GM12878 (cell line): ENCODE measurements at regions of chr4 and their contacts with region 1.

Region 1: DNA sequence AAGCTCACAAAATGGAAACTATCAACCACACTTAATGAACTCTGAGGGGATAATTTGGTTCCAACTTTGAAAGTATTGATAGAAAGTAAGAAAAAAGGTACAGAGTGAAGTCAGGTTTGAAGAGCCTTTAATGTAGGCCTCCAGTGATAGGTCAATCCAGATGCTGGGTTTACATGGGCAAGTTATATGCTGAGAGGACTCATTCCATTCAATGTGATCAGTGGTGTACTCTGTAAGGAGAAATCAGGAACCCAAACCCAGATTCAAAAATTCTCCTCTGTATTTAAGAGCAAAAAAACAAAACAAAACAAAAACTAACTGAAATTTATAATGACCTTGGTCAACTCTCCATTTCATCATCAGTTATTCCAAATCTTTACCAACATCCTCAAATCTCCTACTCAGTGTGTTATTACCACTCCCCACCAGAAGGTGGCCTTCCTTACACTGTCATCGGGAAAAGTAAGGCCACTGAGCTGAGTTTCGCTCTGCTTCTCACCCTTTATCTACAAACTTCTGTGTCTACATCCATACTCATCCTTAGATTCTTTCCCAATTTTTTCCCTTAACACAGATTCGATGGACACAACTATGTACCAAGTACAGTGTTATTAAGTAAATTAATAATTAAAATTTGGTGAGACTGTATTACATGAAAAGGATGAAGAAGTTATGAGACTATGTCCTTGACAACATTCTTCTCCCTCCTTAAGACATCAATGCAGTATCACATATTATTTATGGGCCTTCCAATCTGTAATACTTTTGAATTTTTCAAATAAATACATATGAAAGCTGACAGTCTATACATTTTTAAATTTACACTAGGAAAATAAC is 88.3 kb downstream of the ZAR1 start:
- DNase-seq: peak; percentile 12
- ATAC-seq: peak; percentile 90
- H3K4me3 ChIP-seq: no peak overlapping the region
- H3K27ac ChIP-seq: no peak overlapping the region
- H3K4me1 ChIP-seq: no peaks in the 10 kb centered on the region
- H3K27me3 ChIP-seq: no peaks in the 10 kb centered on the region
- CTCF ChIP-seq: peak; percentile 82 to 86 (median 85)
- EP300 ChIP-seq: no peak
- POLR2A ChIP-seq: no peak
- RAD21 ChIP-seq: peak; percentile 93

Region 2: DNA sequence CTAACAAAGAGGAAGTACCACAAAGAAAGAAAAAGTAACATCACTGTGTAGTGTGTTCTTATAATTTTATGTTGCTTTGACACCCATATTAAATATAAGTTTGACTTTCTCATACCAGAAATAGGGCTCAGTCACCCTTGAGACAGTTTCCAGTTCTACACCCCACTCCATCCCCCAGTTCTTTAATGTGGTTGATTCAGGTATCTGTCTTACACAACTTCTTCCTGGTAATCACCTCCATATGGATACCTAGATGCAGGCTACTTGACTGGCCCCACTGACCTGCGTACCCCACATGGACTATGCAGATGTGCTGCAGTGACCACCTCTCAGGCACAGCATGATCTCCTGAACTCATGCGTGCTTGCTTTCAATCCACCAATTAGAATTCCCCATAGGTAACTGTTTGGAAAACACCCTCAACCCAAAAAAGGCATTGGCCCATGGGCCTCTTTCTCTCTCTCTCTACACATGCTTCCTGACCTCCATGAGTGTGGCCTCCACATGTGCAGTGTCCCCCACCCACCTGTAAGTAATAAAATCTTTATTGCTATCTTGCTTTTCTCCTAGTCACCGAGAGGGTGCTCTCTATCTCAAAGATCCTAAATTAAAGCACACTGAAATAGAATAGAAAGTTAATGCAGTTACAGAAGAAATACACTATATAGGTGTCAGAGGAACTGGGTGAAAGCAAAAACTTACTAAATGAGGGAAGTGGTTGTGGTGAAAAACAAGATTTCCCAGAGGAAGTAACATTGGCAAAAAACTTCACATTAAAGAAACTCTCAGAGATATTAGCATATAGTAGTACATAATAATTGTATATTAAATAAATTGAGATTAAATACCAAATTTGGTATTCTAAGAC is 10.1 kb after region 1 on chr4:
- CTCF ChIA-PET with region 1: interaction called, 10 read pairs
- POLR2A ChIA-PET with region 1: no interaction called
- RAD21 ChIA-PET with region 1: interaction called, 4 read pairs
- SMC1A ChIA-PET with region 1: interaction called, 5 read pairs
- in situ Hi-C with region 1: no loop called
- intact Hi-C with region 1: no loop called
- DNase-seq: no peak
- ATAC-seq: peak; percentile 35
- H3K4me3 ChIP-seq: no peak overlapping the region
- H3K27ac ChIP-seq: no peak overlapping the region
- H3K4me1 ChIP-seq: peaks cover 7% of the 10 kb centered on the region
- H3K27me3 ChIP-seq: no peaks in the 10 kb centered on the region
- CTCF ChIP-seq: no peak
- EP300 ChIP-seq: no peak
- POLR2A ChIP-seq: no peak
- RAD21 ChIP-seq: no peak

Region 3: GRCh38 chr4:48668254-48669017 is 90.1 kb after region 1 on chr4:
- CTCF ChIA-PET with region 1: interaction called, 11 read pairs
- POLR2A ChIA-PET with region 1: no interaction called
- RAD21 ChIA-PET with region 1: no interaction called
- SMC1A ChIA-PET with region 1: no interaction called
- in situ Hi-C with region 1: no loop called
- intact Hi-C with region 1: no loop called
- DNase-seq: no peak
- ATAC-seq: peak; percentile 59
- H3K4me3 ChIP-seq: no peak overlapping the region
- H3K27ac ChIP-seq: 0 out of 2 replicates have a peak overlapping the region, but pooled peaks have one; percentile 11
- H3K4me1 ChIP-seq: no peaks in the 10 kb centered on the region
- H3K27me3 ChIP-seq: no peaks in the 10 kb centered on the region
- CTCF ChIP-seq: no peak
- EP300 ChIP-seq: no peak
- POLR2A ChIP-seq: no peak
- RAD21 ChIP-seq: no peak

Region 4: GRCh38 chr4:48698029-48698971 is 120.0 kb after region 1 on chr4:
- CTCF ChIA-PET with region 1: interaction called, 17 read pairs
- POLR2A ChIA-PET with region 1: no interaction called
- RAD21 ChIA-PET with region 1: no interaction called
- SMC1A ChIA-PET with region 1: interaction called, 6 read pairs
- in situ Hi-C with region 1: no loop called
- intact Hi-C with region 1: no loop called
- DNase-seq: no peak
- ATAC-seq: no peak
- H3K4me3 ChIP-seq: no peak overlapping the region
- H3K27ac ChIP-seq: no peak overlapping the region
- H3K4me1 ChIP-seq: peaks cover 6% of the 10 kb centered on the region
- H3K27me3 ChIP-seq: no peaks in the 10 kb centered on the region
- CTCF ChIP-seq: no peak
- EP300 ChIP-seq: no peak
- POLR2A ChIP-seq: no peak
- RAD21 ChIP-seq: no peak

Region 5: DNA sequence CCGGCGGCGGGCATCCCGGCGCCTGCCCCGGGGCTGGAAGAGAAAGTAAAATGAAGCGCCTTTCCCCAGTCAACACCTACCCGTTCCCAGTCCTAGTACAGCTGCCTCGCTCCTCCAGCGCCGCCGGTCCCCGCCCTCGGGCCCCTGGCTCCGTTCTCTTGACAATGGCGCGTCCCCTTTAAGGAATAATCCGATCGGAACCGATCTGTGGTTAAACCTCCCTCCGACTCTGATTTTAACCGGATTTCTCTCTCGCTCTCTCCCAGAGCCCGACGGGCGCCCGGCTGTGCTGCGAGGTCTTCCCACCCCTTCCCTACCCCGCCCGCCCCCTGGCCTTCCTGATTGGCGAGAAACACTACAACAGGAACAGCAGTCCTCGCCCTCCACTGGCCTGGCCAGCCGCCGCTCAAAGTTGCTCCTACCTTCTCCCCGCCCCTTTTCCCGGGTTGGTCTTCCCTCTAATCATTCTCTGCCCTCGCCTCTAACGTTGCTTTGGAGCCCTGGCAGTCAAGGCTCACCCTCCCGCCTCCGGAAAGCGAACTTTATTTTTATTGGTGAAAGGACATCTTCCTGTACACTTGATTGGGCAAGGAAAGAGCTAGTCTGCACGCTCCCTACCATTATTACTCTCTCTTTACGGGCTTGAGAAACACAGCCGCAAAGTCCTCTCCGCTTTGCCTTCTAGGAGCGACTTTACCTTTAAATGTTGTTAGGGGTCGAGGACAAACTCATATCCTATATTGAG is 201.8 kb after region 1 on chr4 and contains the start of gene FRYL:
- CTCF ChIA-PET with region 1: interaction called, 38 read pairs
- POLR2A ChIA-PET with region 1: interaction called, 3 read pairs
- RAD21 ChIA-PET with region 1: interaction called, 4 read pairs
- SMC1A ChIA-PET with region 1: interaction called, 4 read pairs
- in situ Hi-C with region 1: no loop called
- intact Hi-C with region 1: loop called (anchors 5 kb)
- DNase-seq: peak; percentile 99
- ATAC-seq: peak; percentile 88
- H3K4me3 ChIP-seq: peak within 1 kb of the TSS; percentile 97
- H3K27ac ChIP-seq: peak within 1 kb of the TSS; percentile 97
- H3K4me1 ChIP-seq: 0 out of 2 replicates have a peak, but pooled peaks cover 2% of the 10 kb centered on the region
- H3K27me3 ChIP-seq: no peaks in the 10 kb centered on the region
- CTCF ChIP-seq: no peak
- EP300 ChIP-seq: no peak
- POLR2A ChIP-seq: peak; percentile 60
- RAD21 ChIP-seq: no peak
- polyA plus RNA-seq, gene FRYL: 10.3 to 12.6 TPM

Region 6: GRCh38 chr4:48906206-48907173 is 328.1 kb after region 1 on chr4 and contains the start of gene OCIAD2:
- CTCF ChIA-PET with region 1: interaction called, 23 read pairs
- POLR2A ChIA-PET with region 1: no interaction called
- RAD21 ChIA-PET with region 1: interaction called, 6 read pairs
- SMC1A ChIA-PET with region 1: interaction called, 5 read pairs
- in situ Hi-C with region 1: no loop called
- intact Hi-C with region 1: loop called (anchors 2 kb)
- DNase-seq: peak; percentile 39
- ATAC-seq: peak; percentile 96
- H3K4me3 ChIP-seq: peak within 1 kb of the TSS; percentile 86
- H3K27ac ChIP-seq: peak within 1 kb of the TSS; percentile 43; the same call in 1 of the 2 replicates
- H3K4me1 ChIP-seq: 0 out of 2 replicates have a peak, but pooled peaks cover 4% of the 10 kb centered on the region
- H3K27me3 ChIP-seq: no peaks in the 10 kb centered on the region
- CTCF ChIP-seq: peak; percentile 26 to 55 (median 34); a peak in 4 of 6 replicates
- EP300 ChIP-seq: no peak
- POLR2A ChIP-seq: peak; percentile 92
- RAD21 ChIP-seq: peak; percentile 50
- polyA plus RNA-seq, gene OCIAD2: 60.1 to 65.1 TPM

Region 7: GRCh38 chr4:48963042-48963679 is 384.8 kb after region 1 on chr4:
- CTCF ChIA-PET with region 1: interaction called, 69 read pairs
- POLR2A ChIA-PET with region 1: no interaction called
- RAD21 ChIA-PET with region 1: interaction called, 7 read pairs
- SMC1A ChIA-PET with region 1: interaction called, 19 read pairs
- in situ Hi-C with region 1: loop called (anchors 5 kb)
- intact Hi-C with region 1: loop called (anchors 1 kb)
- DNase-seq: peak; percentile 21
- ATAC-seq: peak; percentile 97
- H3K4me3 ChIP-seq: no peak overlapping the region
- H3K27ac ChIP-seq: no peak overlapping the region
- H3K4me1 ChIP-seq: no peaks in the 10 kb centered on the region
- H3K27me3 ChIP-seq: no peaks in the 10 kb centered on the region; a peak in 1 of 4 replicates
- CTCF ChIP-seq: peak; percentile 89 to 100 (median 99); a peak in 5 of 6 replicates
- EP300 ChIP-seq: no peak
- POLR2A ChIP-seq: no peak
- RAD21 ChIP-seq: peak; percentile 97